Heart left ventricle (tissue), 16 donors: ENCODE measurements at regions of chr11 and their contacts with region 1.

Region 1: DNA sequence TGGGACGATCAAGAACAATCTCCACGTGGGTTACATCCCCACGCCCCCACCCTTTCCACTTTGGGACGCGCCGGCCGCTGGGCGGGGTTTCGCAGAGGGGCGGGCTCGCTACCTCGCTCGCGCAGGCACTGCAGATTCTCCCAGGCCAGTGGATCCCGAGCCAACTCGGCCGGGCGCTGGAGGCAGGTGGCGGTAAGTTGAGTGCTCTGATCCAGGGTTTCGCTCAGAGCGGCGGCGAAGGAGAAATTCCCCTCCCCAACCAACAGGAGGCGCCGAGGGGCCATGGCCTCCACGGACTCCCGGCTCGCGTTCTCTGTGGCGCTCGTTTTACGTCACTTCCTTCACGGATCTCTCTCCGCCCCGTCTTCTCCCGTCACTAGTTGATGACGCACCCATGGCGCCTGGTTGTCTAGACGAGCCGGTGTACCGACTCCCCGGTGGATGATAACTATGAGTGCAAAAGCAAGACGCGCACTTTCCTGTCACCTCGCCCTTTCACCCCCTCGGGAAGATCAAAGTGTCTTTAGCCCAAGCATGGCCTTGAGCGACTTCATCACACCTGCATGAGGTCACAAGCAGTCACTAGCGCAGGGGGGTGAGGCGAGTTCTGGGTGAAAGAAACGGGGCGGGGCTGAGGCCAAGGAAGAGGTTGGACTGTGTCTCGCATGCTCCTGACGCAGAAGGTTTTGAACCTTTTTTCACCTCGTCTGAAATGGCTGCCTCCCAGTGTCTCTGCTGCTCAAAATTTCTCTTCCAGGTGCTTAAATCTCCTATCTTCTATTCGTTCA is at the starts of genes CFAP68 and FDXACB1:
- DNase-seq: peak; percentile 97 to 98 (median 98)
- ATAC-seq: peak; percentile 93 to 96 (median 95)
- H3K4me3 ChIP-seq: peak within 1 kb of the TSS; percentile 41 to 84 (median 72)
- H3K27ac ChIP-seq: peak within 1 kb of the TSS; percentile 90 to 98 (median 93)
- H3K4me1 ChIP-seq: peaks cover 0 to 24% (median 12%) of the 10 kb centered on the region in 12 donors
- H3K27me3 ChIP-seq: no peaks in the 10 kb centered on the region
- CTCF ChIP-seq: peak; percentile 91 to 99 (median 96)
- POLR2A ChIP-seq: peak in 1 of 2 donors; percentile 65
- total RNA-seq, gene CFAP68: 11.9 to 38.7 (median 31.8) TPM
- total RNA-seq, gene FDXACB1: 0.93 to 2.0 (median 1.3) TPM

Region 2: DNA sequence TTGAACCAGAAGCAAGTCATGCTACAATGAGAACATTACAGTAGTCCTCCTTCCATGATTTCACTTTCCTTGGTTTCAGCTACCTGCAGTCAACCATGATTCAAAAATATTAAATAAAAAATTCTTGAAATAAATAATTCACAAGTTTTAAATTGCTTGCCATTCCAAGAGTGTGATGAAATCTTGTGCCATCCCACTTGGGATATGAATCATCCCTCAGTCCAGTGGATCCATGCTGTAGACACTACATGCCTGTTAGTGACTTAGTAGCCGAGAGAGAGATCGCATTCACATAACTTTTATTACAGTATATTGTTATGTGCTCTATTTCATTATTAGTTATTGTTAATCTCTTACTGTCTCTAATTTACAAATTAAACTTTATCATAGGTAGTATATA is 358.5 kb before region 1 on chr11:
- intact Hi-C with region 1: no loop called
- DNase-seq: no peak
- ATAC-seq: no peak
- H3K4me3 ChIP-seq: no peak overlapping the region
- H3K27ac ChIP-seq: no peak overlapping the region
- H3K4me1 ChIP-seq: no peaks in the 10 kb centered on the region
- H3K27me3 ChIP-seq: peaks cover 0 to 4% (median 0%) of the 10 kb centered on the region in 9 donors
- CTCF ChIP-seq: no peak
- POLR2A ChIP-seq: no peak

Region 3: DNA sequence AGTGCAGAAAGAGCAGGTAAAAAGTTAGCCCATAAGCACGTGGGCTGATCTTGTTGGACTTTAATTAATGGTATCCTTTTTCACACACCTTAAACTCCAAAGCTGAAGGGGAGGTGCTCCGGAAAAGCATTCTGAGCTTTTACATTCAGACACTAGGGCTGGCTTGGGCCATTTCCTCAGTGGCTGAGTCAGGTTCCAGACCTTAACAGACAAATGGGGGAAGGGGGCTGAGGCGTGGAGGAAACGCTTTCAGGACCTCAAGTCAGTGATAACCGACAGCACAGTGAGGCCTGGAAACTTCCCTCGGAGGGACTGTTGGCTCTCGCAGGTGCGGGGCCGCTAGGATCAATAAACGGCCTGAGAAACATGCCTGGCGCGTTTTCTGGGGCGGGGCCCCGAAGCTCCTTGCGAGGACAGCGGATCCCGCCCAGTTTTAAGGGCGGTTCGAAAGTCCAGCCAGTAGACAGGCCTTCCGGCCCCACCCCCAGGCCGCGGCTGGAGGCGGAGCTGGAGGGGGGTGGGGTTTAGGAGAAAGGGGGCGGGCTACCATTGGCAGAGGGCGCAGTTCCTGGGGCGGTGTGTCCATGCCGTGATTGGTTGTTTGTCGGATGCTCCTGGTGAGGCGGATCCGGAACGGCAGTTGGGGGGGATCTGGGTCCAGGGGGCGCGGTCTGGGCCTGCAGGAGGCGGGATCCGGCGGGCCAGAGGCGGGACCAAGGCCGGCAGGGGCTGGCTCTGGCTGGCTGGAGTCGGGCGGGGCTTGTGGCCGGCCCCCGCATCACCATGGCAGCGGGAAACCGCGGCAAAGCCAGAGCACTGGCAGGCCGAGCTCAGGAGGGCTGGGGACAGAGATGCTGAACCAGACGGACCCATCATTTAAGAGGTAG is 47.7 kb after region 1 on chr11:
- intact Hi-C with region 1: loop called in 9 of 10 experiments (anchors 1 to 5 kb)
- DNase-seq: peak; percentile 97 to 98 (median 97)
- ATAC-seq: peak; percentile 93 to 97 (median 96)
- H3K4me3 ChIP-seq: peak overlapping the region; percentile 2 to 66 (median 52)
- H3K27ac ChIP-seq: peak overlapping the region; percentile 51 to 93 (median 86)
- H3K4me1 ChIP-seq: peaks cover 0 to 52% (median 36%) of the 10 kb centered on the region in 12 donors
- H3K27me3 ChIP-seq: no peaks in the 10 kb centered on the region
- CTCF ChIP-seq: peak in 1 of 12 donors; percentile 9
- POLR2A ChIP-seq: peak in 1 of 2 donors; percentile 72

Region 4: GRCh38 chr11:111982019-111982464 is 103.0 kb after region 1 on chr11:
- intact Hi-C with region 1: loop called in 9 of 10 experiments (anchors 1 to 5 kb)
- DNase-seq: peak in 4 of 5 donors; percentile 39 to 70 (median 52)
- ATAC-seq: peak; percentile 48 to 61 (median 53)
- H3K4me3 ChIP-seq: peak overlapping the region in 1 of 12 donors; percentile 18
- H3K27ac ChIP-seq: peak overlapping the region in 11 of 12 donors; percentile 8 to 92 (median 55)
- H3K4me1 ChIP-seq: peaks cover 0 to 57% (median 24%) of the 10 kb centered on the region in 12 donors
- H3K27me3 ChIP-seq: peaks cover 0 to 20% (median 0%) of the 10 kb centered on the region in 9 donors
- CTCF ChIP-seq: peak; percentile 30 to 67 (median 54)
- POLR2A ChIP-seq: no peak

Region 5: DNA sequence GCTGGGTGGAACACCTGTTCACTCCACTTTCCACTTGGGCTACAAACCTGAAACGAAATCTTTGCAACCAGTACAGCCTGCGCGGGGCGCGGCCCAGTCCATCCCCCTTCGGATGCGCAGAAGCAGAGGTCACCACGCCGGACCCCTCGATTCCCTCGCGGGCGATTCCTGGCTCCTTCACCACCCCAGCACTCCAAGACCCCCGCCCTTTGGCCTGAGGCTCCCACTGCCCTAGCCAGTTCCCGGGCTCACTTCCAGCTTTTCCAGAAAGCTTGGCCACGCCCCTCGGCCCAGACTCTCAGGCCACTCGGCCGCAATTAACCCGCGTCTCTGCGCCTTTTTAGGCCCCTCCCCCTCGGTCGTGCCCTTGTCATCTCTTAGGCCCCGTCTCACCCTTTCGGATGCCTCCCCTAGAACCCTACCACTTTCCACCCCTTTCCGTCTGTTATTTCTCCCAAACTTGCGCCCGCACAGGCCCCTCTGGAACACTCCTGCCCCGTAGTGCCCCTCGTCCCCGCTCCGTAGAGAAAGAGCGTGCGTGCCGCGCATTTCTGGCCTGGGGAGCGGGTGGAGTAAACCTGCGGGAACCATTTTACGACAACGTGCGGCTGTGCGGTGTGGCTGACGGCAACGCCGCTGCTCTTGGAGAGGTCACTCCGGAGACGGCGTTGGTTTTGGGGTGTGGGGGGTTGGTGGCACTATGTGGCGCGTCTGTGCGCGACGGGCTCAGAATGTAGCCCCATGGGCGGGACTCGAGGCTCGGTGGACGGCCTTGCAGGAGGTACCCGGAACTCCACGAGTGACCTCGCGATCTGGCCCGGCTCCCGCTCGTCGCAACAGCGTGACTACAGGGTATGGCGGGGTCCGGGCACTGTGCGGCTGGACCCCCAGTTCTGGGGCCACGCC is 146.0 kb after region 1 on chr11 and contains the start of gene DLAT:
- intact Hi-C with region 1: loop called in 1 of 10 experiments (anchors 5 kb)
- DNase-seq: peak; percentile 88 to 94 (median 92)
- ATAC-seq: peak; percentile 89 to 94 (median 93)
- H3K4me3 ChIP-seq: peak within 1 kb of the TSS; percentile 66 to 97 (median 88)
- H3K27ac ChIP-seq: peak within 1 kb of the TSS; percentile 85 to 96 (median 92)
- H3K4me1 ChIP-seq: peaks cover 0 to 31% (median 16%) of the 10 kb centered on the region in 12 donors
- H3K27me3 ChIP-seq: no peaks in the 10 kb centered on the region
- CTCF ChIP-seq: no peak
- POLR2A ChIP-seq: peak in 1 of 2 donors; percentile 48
- total RNA-seq, gene DLAT: 110 to 179 (median 160) TPM

Region 6: GRCh38 chr11:112321521-112322172 is 442.6 kb after region 1 on chr11:
- intact Hi-C with region 1: no loop called
- DNase-seq: peak in 3 of 5 donors; percentile 48 to 51 (median 49)
- ATAC-seq: peak in 3 of 4 donors; percentile 63 to 79 (median 64)
- H3K4me3 ChIP-seq: no peak overlapping the region
- H3K27ac ChIP-seq: no peak overlapping the region
- H3K4me1 ChIP-seq: peaks cover 0 to 39% (median 25%) of the 10 kb centered on the region in 12 donors
- H3K27me3 ChIP-seq: no peaks in the 10 kb centered on the region
- CTCF ChIP-seq: no peak
- POLR2A ChIP-seq: no peak